GM12878 (cell line): ENCODE measurements at regions of chr17 and their contacts with region 1.

Region 1: GRCh38 chr17:74296548-74296936 is 22.5 kb downstream of the DNAI2 start:
- DNase-seq: no peak
- ATAC-seq: peak; percentile 83
- H3K4me3 ChIP-seq: no peak overlapping the region
- H3K27ac ChIP-seq: no peak overlapping the region
- H3K4me1 ChIP-seq: no peaks in the 10 kb centered on the region
- H3K27me3 ChIP-seq: no peaks in the 10 kb centered on the region
- CTCF ChIP-seq: peak; percentile 43 to 72 (median 56); a peak in 4 of 6 replicates
- EP300 ChIP-seq: no peak
- POLR2A ChIP-seq: no peak
- RAD21 ChIP-seq: peak; percentile 47

Region 2: GRCh38 chr17:74110467-74110866 is 186.1 kb before region 1 on chr17:
- CTCF ChIA-PET with region 1: no interaction called
- POLR2A ChIA-PET with region 1: no interaction called
- RAD21 ChIA-PET with region 1: no interaction called
- SMC1A ChIA-PET with region 1: no interaction called
- in situ Hi-C with region 1: no loop called
- intact Hi-C with region 1: no loop called
- DNase-seq: no peak
- ATAC-seq: no peak
- H3K4me3 ChIP-seq: no peak overlapping the region
- H3K27ac ChIP-seq: no peak overlapping the region
- H3K4me1 ChIP-seq: no peaks in the 10 kb centered on the region
- H3K27me3 ChIP-seq: no peaks in the 10 kb centered on the region
- CTCF ChIP-seq: no peak
- EP300 ChIP-seq: no peak
- POLR2A ChIP-seq: no peak
- RAD21 ChIP-seq: no peak

Region 3: DNA sequence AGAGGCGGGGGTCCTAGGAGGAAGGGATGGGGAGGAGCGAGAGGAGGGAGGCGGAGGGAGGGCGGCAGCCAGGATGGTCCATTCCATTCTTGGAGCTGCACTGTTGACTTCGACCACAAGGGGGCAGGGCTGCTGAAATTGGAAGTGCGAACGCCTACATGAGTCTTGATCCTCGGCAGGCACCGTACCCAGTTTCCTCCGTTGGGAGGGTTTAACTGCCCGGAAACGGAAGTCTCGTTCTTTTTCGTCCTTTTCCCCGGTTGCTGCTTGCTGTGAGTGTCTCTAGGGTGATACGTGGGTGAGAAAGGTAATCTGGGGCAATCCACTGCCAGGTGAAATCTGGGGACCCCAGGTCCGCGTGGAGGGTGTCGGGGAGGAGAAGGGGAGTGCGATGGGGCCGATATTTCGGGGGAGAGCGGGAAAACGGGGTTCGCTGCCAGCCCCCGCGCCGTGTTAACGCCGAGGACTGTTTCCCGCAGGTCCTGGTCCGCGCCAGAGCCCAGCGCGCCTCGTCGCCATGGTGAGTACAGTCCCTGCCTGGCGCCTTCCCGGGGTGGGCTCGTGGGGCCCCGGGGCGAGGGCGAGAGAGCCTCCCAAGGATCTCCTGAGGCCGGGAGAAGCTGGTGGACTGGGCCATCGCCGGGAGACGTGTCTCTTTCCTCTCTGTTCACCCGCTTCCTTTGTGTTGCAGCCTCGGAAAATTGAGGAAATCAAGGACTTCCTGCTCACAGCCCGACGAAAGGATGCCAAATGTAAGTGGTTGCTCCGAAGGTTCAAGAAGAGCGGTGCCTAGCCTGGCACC is 92.9 kb before region 1 on chr17 and contains the start of gene RPL38:
- CTCF ChIA-PET with region 1: interaction called, 20 read pairs
- POLR2A ChIA-PET with region 1: interaction called, 3 read pairs
- RAD21 ChIA-PET with region 1: interaction called, 6 read pairs
- SMC1A ChIA-PET with region 1: interaction called, 3 read pairs
- in situ Hi-C with region 1: no loop called
- intact Hi-C with region 1: no loop called
- DNase-seq: peak; percentile 91
- ATAC-seq: peak; percentile 80
- H3K4me3 ChIP-seq: peak within 1 kb of the TSS; percentile 99
- H3K27ac ChIP-seq: peak within 1 kb of the TSS; percentile 90
- H3K4me1 ChIP-seq: peaks cover 10% of the 10 kb centered on the region
- H3K27me3 ChIP-seq: peaks cover 0 to 7% of the 10 kb centered on the region in 2 experiments; a peak in 3 of 4 replicates
- CTCF ChIP-seq: peak; percentile 93 to 97 (median 96); a peak in 5 of 6 replicates
- EP300 ChIP-seq: 0 out of 4 replicates have a peak, but pooled peaks of 1 of the 2 experiments have one; percentile 34
- POLR2A ChIP-seq: peak; percentile 100
- RAD21 ChIP-seq: peak; percentile 30; the same call in 1 of the 2 replicates
- polyA plus RNA-seq, gene RPL38: 2,918 to 3,855 TPM

Region 4: GRCh38 chr17:74274060-74274708 is 22.4 kb before region 1 on chr17 and contains the start of gene DNAI2:
- CTCF ChIA-PET with region 1: interaction called, 26 read pairs
- POLR2A ChIA-PET with region 1: interaction called, 7 read pairs
- RAD21 ChIA-PET with region 1: interaction called, 11 read pairs
- SMC1A ChIA-PET with region 1: interaction called, 12 read pairs
- in situ Hi-C with region 1: no loop called
- intact Hi-C with region 1: no loop called
- DNase-seq: no peak
- ATAC-seq: no peak; the same call in 1 of the 3 replicates
- H3K4me3 ChIP-seq: no peak within 1 kb of the TSS
- H3K27ac ChIP-seq: no peak within 1 kb of the TSS; the same call in 1 of the 2 replicates
- H3K4me1 ChIP-seq: peaks cover 21% of the 10 kb centered on the region
- H3K27me3 ChIP-seq: no peaks in the 10 kb centered on the region
- CTCF ChIP-seq: no peak
- EP300 ChIP-seq: no peak
- POLR2A ChIP-seq: no peak
- RAD21 ChIP-seq: no peak
- polyA plus RNA-seq, gene DNAI2: 0.04 to 0.08 TPM

Region 5: DNA sequence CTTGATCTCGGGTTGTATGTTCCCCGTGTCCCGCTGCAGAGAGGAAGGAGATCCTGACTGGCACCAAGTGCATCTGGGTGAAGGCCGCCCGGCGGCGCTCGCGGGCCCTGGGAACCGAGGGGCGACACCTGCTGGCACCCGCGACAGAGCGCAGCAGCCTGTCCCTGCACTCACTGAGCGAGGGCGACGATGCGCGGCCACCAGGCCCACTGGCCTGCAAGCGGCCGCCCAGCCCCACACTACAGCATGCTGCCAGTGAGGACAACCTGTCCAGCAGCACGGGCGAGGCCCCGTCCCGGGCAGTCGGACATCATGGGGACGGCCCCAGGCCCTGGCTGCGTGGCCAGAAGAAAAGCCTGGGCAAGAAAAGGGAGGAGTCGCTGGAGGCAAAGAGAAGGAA is 57.6 kb after region 1 on chr17:
- CTCF ChIA-PET with region 1: interaction called, 10 read pairs
- POLR2A ChIA-PET with region 1: no interaction called
- RAD21 ChIA-PET with region 1: interaction called, 3 read pairs
- SMC1A ChIA-PET with region 1: interaction called, 14 read pairs
- in situ Hi-C with region 1: no loop called
- intact Hi-C with region 1: loop called (anchors 2 kb)
- DNase-seq: no peak
- ATAC-seq: peak; percentile 96
- H3K4me3 ChIP-seq: no peak overlapping the region
- H3K27ac ChIP-seq: no peak overlapping the region
- H3K4me1 ChIP-seq: no peaks in the 10 kb centered on the region
- H3K27me3 ChIP-seq: peaks cover 3 to 8% of the 10 kb centered on the region in 2 experiments; a peak in 3 of 4 replicates
- CTCF ChIP-seq: peak; percentile 91 to 96 (median 95)
- EP300 ChIP-seq: no peak
- POLR2A ChIP-seq: no peak
- RAD21 ChIP-seq: peak; percentile 47

Region 6: DNA sequence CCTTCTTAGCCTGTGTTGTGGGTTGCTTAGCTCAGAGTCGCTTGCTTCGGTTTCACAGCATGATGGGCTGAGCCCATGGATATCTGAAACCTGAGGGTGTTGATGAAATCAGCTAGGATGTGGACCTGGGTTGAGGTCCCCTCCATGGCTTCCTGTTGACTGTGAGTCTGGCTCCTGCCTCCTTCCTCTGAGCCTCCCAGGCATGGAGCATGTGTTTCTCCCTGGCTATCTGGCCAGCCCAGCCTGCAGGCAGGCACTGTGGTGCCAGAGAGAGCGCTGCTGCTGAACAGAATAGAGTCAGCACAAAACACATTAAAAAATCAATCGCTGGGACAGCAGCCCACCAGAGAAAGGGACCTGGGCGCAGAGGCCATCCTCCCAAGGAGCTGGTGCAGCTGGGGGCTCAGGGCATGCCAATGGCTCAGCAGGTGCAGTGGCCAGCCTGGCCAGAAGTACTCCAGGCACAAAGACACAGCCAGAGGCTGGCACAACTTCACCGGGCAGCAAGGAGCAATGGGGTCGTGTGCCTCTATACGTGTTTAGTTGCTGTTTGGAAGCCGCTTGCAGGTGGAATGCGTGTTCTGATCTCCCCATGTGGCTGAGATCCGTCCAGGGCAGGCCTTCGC is 107.1 kb after region 1 on chr17:
- CTCF ChIA-PET with region 1: no interaction called
- POLR2A ChIA-PET with region 1: no interaction called
- RAD21 ChIA-PET with region 1: no interaction called
- SMC1A ChIA-PET with region 1: no interaction called
- in situ Hi-C with region 1: no loop called
- intact Hi-C with region 1: no loop called
- DNase-seq: no peak
- ATAC-seq: no peak
- H3K4me3 ChIP-seq: no peak overlapping the region
- H3K27ac ChIP-seq: no peak overlapping the region
- H3K4me1 ChIP-seq: no peaks in the 10 kb centered on the region
- H3K27me3 ChIP-seq: no peaks in the 10 kb centered on the region; a peak in 1 of 4 replicates
- CTCF ChIP-seq: no peak
- EP300 ChIP-seq: no peak
- POLR2A ChIP-seq: no peak
- RAD21 ChIP-seq: no peak

Region 7: DNA sequence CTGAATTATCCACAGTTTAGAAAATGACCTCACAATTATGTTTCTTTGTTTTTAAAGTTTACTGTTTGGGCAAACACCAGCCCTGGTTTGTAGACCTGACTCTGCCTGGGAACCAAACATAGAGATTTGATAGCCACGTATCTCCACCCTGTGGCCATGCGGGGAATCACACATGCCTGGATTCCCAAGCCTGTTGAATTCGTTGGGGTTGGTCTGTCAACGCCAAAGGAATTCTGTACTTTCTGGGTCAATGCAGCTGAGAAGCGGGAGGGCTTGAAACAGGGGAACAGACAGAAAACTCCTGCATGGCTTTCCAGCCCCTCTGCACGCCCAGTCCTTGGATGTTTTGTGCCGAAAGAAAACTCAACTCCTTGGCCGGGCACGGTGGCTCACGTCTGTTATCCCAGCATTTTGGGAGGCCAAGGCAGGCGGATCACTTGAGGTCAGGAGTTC is 196.9 kb after region 1 on chr17:
- CTCF ChIA-PET with region 1: no interaction called
- POLR2A ChIA-PET with region 1: no interaction called
- RAD21 ChIA-PET with region 1: no interaction called
- SMC1A ChIA-PET with region 1: no interaction called
- in situ Hi-C with region 1: no loop called
- intact Hi-C with region 1: loop called (anchors 1 kb)
- DNase-seq: peak; percentile 28
- ATAC-seq: peak; percentile 92
- H3K4me3 ChIP-seq: no peak overlapping the region
- H3K27ac ChIP-seq: no peak overlapping the region
- H3K4me1 ChIP-seq: no peaks in the 10 kb centered on the region
- H3K27me3 ChIP-seq: no peaks in the 10 kb centered on the region
- CTCF ChIP-seq: peak; percentile 93 to 95 (median 94); a peak in 5 of 6 replicates
- EP300 ChIP-seq: no peak
- POLR2A ChIP-seq: no peak
- RAD21 ChIP-seq: peak; percentile 98